ENCODE measurements at regions of chr2 and their contacts with region 1.

Region 1: GRCh38 chr2:42086500-42086953 is 38.7 kb downstream of the PKDCC start:
- DNase-seq: peak; percentile 71 to 80
- ATAC-seq: peak; percentile 69 to 84
- H3K4me3 ChIP-seq: no peak overlapping the region
- H3K27ac ChIP-seq: peak overlapping the region; percentile 73 to 80
- H3K4me1 ChIP-seq: peaks cover 48% of the 10 kb centered on the region
- CTCF ChIP-seq: peak; percentile 98
- EP300 ChIP-seq: no peak
- POLR2A ChIP-seq: no peak
- RAD21 ChIP-seq: peak; percentile 99 to 100

Region 2: GRCh38 chr2:41840702-41841551 is 245.6 kb before region 1 on chr2:
- CTCF ChIA-PET with region 1: interaction called, 715 read pairs
- POLR2A ChIA-PET with region 1: interaction called, 4 read pairs
- DNase-seq: peak; percentile 97 to 99
- ATAC-seq: peak; percentile 98 to 100
- H3K4me3 ChIP-seq: peak overlapping the region; percentile 67
- H3K27ac ChIP-seq: peak overlapping the region; percentile 86 to 95
- H3K4me1 ChIP-seq: peaks cover 11% of the 10 kb centered on the region
- CTCF ChIP-seq: peak; percentile 99
- EP300 ChIP-seq: no peak
- POLR2A ChIP-seq: peak; percentile 77
- RAD21 ChIP-seq: peak; percentile 97 to 98

Region 3: GRCh38 chr2:41879235-41879916 is 207.2 kb before region 1 on chr2:
- CTCF ChIA-PET with region 1: interaction called, 761 read pairs
- POLR2A ChIA-PET with region 1: no interaction called
- DNase-seq: no peak
- ATAC-seq: peak in 1 of 2 experiments; percentile 34; a peak in 3 of 6 replicates
- H3K4me3 ChIP-seq: no peak overlapping the region
- H3K27ac ChIP-seq: peak overlapping the region in 1 of 2 experiments; percentile 46; a peak in 2 of 6 replicates
- H3K4me1 ChIP-seq: peaks cover 5% of the 10 kb centered on the region; the same call in 2 of the 3 replicates
- CTCF ChIP-seq: no peak
- EP300 ChIP-seq: no peak
- POLR2A ChIP-seq: no peak
- RAD21 ChIP-seq: no peak

Region 4: DNA sequence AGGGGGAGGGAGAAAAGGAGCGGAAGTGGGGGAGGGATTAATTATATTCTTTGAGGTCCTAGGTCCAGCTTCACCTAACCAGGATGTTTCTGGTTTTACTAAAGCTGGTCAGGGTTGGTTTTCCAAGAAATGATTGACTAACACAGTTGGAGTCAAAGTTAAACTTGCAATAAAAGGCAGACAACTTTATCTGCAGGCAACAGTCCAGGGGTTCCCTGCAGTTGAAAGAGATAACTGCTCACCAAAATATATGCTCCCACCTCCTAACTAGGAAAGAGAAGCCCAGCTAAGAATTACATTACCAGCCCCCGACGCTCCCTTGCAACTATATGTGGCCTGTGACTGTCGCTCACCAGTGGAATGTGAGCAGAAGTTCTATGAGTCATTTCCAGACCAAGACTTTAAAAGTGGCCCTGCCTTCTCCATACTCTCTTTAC is 178.7 kb before region 1 on chr2:
- CTCF ChIA-PET with region 1: interaction called, 11 read pairs
- POLR2A ChIA-PET with region 1: no interaction called
- DNase-seq: no peak
- ATAC-seq: peak in 1 of 2 experiments; percentile 58; a peak in 3 of 6 replicates
- H3K4me3 ChIP-seq: no peak overlapping the region
- H3K27ac ChIP-seq: peak overlapping the region in 1 of 2 experiments; percentile 12; a peak in 1 of 6 replicates
- H3K4me1 ChIP-seq: peaks cover 11% of the 10 kb centered on the region
- CTCF ChIP-seq: no peak
- EP300 ChIP-seq: no peak
- POLR2A ChIP-seq: no peak
- RAD21 ChIP-seq: no peak

Region 5: DNA sequence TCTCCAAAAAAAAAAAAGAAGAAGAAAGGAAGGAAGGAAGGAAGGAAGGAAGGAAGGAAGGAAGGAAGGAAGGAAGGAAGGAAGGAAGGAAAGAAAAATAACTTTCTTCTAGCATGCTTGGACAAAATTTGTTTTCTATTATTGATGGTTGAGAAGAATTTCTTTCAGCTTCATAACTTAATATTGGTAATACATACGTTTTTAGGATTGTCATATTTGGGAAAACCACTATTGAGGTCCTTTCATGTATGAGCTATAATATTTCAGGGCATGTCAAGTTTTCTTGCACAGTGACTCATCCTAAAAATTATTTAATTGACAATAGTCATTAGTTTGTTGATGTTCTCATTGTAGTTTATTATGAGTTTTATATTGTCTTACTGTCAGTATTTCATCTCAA is 105.1 kb before region 1 on chr2:
- CTCF ChIA-PET with region 1: no interaction called
- POLR2A ChIA-PET with region 1: no interaction called
- DNase-seq: no peak
- ATAC-seq: no peak
- H3K4me3 ChIP-seq: no peak overlapping the region
- H3K27ac ChIP-seq: no peak overlapping the region
- H3K4me1 ChIP-seq: no peaks in the 10 kb centered on the region
- CTCF ChIP-seq: no peak
- EP300 ChIP-seq: no peak
- POLR2A ChIP-seq: no peak
- RAD21 ChIP-seq: no peak

Region 6: GRCh38 chr2:42053791-42054701 is 32.5 kb before region 1 on chr2:
- CTCF ChIA-PET with region 1: interaction called, 40 read pairs
- POLR2A ChIA-PET with region 1: interaction called, 3 read pairs
- DNase-seq: no peak
- ATAC-seq: peak in 1 of 2 experiments; percentile 3; a peak in 3 of 6 replicates
- H3K4me3 ChIP-seq: no peak overlapping the region
- H3K27ac ChIP-seq: peak overlapping the region; percentile 61 to 96
- H3K4me1 ChIP-seq: peaks cover 89% of the 10 kb centered on the region
- CTCF ChIP-seq: no peak
- EP300 ChIP-seq: no peak
- POLR2A ChIP-seq: no peak
- RAD21 ChIP-seq: no peak

Region 7: GRCh38 chr2:42105330-42106256 is 19.1 kb after region 1 on chr2:
- CTCF ChIA-PET with region 1: interaction called, 16 read pairs
- POLR2A ChIA-PET with region 1: no interaction called
- DNase-seq: no peak
- ATAC-seq: no peak
- H3K4me3 ChIP-seq: no peak overlapping the region
- H3K27ac ChIP-seq: peak overlapping the region in 1 of 2 experiments; percentile 20; a peak in 1 of 6 replicates
- H3K4me1 ChIP-seq: peaks cover 14% of the 10 kb centered on the region
- CTCF ChIP-seq: no peak
- EP300 ChIP-seq: no peak
- POLR2A ChIP-seq: no peak
- RAD21 ChIP-seq: no peak

Region 8: GRCh38 chr2:42171396-42171980 is 85.0 kb after region 1 on chr2:
- CTCF ChIA-PET with region 1: interaction called, 12 read pairs
- POLR2A ChIA-PET with region 1: no interaction called
- DNase-seq: no peak
- ATAC-seq: no peak
- H3K4me3 ChIP-seq: peak overlapping the region; percentile 71; the same call in 2 of the 3 replicates
- H3K27ac ChIP-seq: peak overlapping the region in 1 of 2 experiments; percentile 19; a peak in 2 of 6 replicates
- H3K4me1 ChIP-seq: peaks cover 29% of the 10 kb centered on the region
- CTCF ChIP-seq: no peak
- EP300 ChIP-seq: no peak
- POLR2A ChIP-seq: no peak
- RAD21 ChIP-seq: no peak

Region 9: DNA sequence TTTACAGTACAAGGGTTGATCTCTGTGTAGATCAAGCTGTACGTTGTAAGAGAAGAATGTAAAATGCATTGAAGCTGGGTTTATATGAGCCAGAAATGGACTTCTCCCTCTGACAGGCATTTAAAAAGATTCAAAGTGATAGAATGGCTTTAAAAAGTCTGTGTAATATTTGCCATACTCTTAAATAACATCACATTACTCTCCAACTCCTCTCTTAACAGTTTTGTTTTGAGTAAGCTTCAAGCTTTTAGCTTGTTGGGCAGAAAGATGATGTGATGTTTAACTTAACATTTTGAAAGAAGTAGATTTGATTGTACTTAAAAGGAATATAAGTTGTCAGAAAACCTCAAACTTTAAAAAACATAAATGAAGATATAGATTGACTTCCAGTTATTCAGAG is 202.3 kb after region 1 on chr2:
- CTCF ChIA-PET with region 1: no interaction called
- POLR2A ChIA-PET with region 1: no interaction called
- DNase-seq: no peak
- ATAC-seq: no peak
- H3K4me3 ChIP-seq: no peak overlapping the region
- H3K27ac ChIP-seq: no peak overlapping the region
- H3K4me1 ChIP-seq: peaks cover 6% of the 10 kb centered on the region; the same call in 1 of the 3 replicates
- CTCF ChIP-seq: no peak
- EP300 ChIP-seq: no peak
- POLR2A ChIP-seq: no peak
- RAD21 ChIP-seq: no peak